Right cardiac atrium (tissue), 5 donors: ENCODE measurements at regions of chr16 and their contacts with region 1.

Region 1: DNA sequence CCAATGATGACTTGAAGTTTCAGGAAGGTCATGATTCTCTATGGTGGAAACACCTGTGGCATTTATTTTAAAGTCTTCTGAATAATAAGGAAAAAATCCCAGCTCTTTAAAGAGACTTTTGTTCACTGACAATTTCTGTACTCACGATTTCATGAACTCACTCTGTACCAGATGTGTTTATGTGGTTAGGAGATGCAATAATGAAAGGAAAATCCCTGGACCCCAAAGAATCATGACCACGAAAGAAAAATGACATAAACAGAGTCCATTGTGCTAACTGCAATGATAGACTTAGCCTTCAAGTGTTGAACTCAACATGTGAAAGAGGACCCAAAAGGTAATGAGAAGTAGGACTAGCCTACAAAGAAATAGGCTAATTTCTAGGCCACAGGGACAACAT is 947.5 kb downstream of the CDH11 start:
- DNase-seq: no peak
- ATAC-seq: no peak
- H3K4me3 ChIP-seq: no peak overlapping the region
- H3K27ac ChIP-seq: no peak overlapping the region
- H3K4me1 ChIP-seq: no peaks in the 10 kb centered on the region
- H3K27me3 ChIP-seq: no peaks in the 10 kb centered on the region

Region 2: GRCh38 chr16:64137977-64138376 is 36.4 kb before region 1 on chr16:
- intact Hi-C with region 1: no loop called
- DNase-seq: no peak
- ATAC-seq: no peak
- H3K4me3 ChIP-seq: no peak overlapping the region
- H3K27ac ChIP-seq: no peak overlapping the region
- H3K4me1 ChIP-seq: no peaks in the 10 kb centered on the region
- H3K27me3 ChIP-seq: no peaks in the 10 kb centered on the region

Region 3: DNA sequence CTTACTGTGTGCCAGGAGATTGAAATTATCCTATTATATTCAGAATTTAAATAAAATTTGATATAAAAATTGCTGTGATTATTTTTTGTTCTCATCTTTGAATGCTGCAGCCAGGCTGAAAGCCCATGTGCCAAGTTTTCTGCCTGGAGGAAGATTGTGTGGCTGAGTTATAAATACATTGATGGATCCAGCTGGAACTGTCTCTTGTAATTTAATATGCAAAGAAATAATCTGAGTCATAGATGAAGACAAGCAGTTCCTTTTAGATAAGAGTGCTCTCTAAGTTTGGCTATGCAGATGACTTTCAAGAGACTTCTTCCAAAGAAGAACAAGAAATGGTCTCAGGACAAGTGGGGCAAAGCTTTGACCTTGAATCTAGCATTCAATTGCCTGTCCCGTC is 76.5 kb after region 1 on chr16:
- intact Hi-C with region 1: loop called in 1 of 4 experiments (anchors 5 kb)
- DNase-seq: peak in 1 of 3 donors; percentile 55
- ATAC-seq: peak; percentile 65 to 71
- H3K4me3 ChIP-seq: no peak overlapping the region
- H3K27ac ChIP-seq: no peak overlapping the region
- H3K4me1 ChIP-seq: no peaks in the 10 kb centered on the region
- H3K27me3 ChIP-seq: no peaks in the 10 kb centered on the region